K562 (cell line): ENCODE measurements at regions of chr1 and their contacts with region 1.

Region 1: GRCh38 chr1:155208541-155209311 is at the start of gene MTX1:
- DNase-seq: peak; percentile 90 to 95 (median 92)
- ATAC-seq: peak; percentile 93
- H3K4me3 ChIP-seq: peak within 1 kb of the TSS; percentile 100
- H3K27ac ChIP-seq: peak within 1 kb of the TSS; percentile 97
- H3K4me1 ChIP-seq: peaks cover 19 to 30% of the 10 kb centered on the region in 2 experiments
- H3K27me3 ChIP-seq: no peaks in the 10 kb centered on the region
- CTCF ChIP-seq: no peak
- EP300 ChIP-seq: peak; percentile 11; the same call in 1 of the 2 replicates
- POLR2A ChIP-seq: peak; percentile 76
- RAD21 ChIP-seq: no peak
- polyA plus RNA-seq, gene MTX1: 29.1 to 66.3 TPM

Region 2: GRCh38 chr1:155218854-155219591 is 10.3 kb after region 1 on chr1:
- CTCF ChIA-PET with region 1: no interaction called
- POLR2A ChIA-PET with region 1: interaction called, 10 read pairs
- in situ Hi-C with region 1: no loop called
- intact Hi-C with region 1: no loop called
- DNase-seq: peak; percentile 64 to 82 (median 66)
- ATAC-seq: peak; percentile 77
- H3K4me3 ChIP-seq: peak overlapping the region; percentile 13; the same call in 1 of the 2 replicates
- H3K27ac ChIP-seq: peak overlapping the region; percentile 44
- H3K4me1 ChIP-seq: peaks cover 9 to 22% of the 10 kb centered on the region in 2 experiments; a peak in 4 of 5 replicates
- H3K27me3 ChIP-seq: no peaks in the 10 kb centered on the region
- CTCF ChIP-seq: no peak
- EP300 ChIP-seq: no peak
- POLR2A ChIP-seq: no peak
- RAD21 ChIP-seq: no peak

Region 3: GRCh38 chr1:155227261-155228095 is 18.8 kb after region 1 on chr1:
- CTCF ChIA-PET with region 1: interaction called, 31 read pairs
- POLR2A ChIA-PET with region 1: interaction called, 4 read pairs
- in situ Hi-C with region 1: no loop called
- intact Hi-C with region 1: loop called (anchors 1 kb)
- DNase-seq: peak; percentile 100
- ATAC-seq: peak; percentile 96
- H3K4me3 ChIP-seq: peak overlapping the region; percentile 51
- H3K27ac ChIP-seq: peak overlapping the region; percentile 86
- H3K4me1 ChIP-seq: peaks cover 30 to 50% of the 10 kb centered on the region in 2 experiments
- H3K27me3 ChIP-seq: no peaks in the 10 kb centered on the region
- CTCF ChIP-seq: peak in 2 of 3 experiments; percentile 2 to 15; a peak in 1 of 6 replicates
- EP300 ChIP-seq: no peak
- POLR2A ChIP-seq: peak; percentile 91
- RAD21 ChIP-seq: no peak

Region 4: DNA sequence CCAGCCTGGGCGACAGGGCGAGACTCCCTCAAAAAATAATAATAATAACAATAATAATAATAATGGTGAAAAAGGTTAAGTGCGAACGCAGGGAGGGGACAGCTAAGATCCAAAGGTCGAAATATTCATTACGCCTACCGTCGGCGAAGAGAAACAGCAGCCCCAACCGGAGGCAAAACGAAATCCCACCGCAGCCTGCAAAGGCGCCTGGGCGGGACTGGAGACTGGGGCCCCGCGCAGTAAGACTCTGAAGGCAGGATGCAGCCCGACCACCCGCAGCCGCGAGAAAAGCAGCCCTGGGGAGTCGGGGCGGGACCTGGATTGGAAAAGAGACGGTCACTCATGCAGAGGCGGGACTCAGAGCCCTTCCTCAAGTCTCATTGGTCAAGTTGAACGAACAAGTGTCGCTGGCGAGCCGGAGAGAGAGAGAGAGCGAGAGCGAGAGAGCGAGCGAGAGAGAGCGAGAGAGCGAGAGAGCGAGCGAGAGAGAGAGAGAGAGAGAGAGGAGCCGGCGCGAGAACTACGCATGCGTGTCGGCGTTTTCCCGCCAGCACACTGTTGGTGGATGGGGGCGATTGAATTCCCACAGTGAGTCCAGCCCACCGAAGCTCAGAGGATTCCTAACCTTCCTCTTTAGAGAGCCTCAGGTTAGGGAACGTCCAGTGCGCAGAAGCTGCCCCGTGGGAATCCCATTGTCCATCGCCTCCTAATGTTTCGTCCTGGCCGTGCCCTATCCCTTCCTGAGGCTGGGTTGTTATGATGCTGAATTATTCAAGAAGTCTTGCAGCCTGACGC is 35.8 kb after region 1 on chr1:
- CTCF ChIA-PET with region 1: interaction called, 4 read pairs
- POLR2A ChIA-PET with region 1: interaction called, 3 read pairs
- in situ Hi-C with region 1: no loop called
- intact Hi-C with region 1: loop called (anchors 2 kb)
- DNase-seq: peak; percentile 92 to 99 (median 94)
- ATAC-seq: peak; percentile 97
- H3K4me3 ChIP-seq: peak overlapping the region; percentile 44
- H3K27ac ChIP-seq: peak overlapping the region; percentile 93
- H3K4me1 ChIP-seq: peaks cover 19 to 25% of the 10 kb centered on the region in 2 experiments
- H3K27me3 ChIP-seq: no peaks in the 10 kb centered on the region
- CTCF ChIP-seq: peak; percentile 40 to 70 (median 59); a peak in 5 of 6 replicates
- EP300 ChIP-seq: peak; percentile 71
- POLR2A ChIP-seq: peak; percentile 94
- RAD21 ChIP-seq: peak; percentile 24 to 37

Region 5: DNA sequence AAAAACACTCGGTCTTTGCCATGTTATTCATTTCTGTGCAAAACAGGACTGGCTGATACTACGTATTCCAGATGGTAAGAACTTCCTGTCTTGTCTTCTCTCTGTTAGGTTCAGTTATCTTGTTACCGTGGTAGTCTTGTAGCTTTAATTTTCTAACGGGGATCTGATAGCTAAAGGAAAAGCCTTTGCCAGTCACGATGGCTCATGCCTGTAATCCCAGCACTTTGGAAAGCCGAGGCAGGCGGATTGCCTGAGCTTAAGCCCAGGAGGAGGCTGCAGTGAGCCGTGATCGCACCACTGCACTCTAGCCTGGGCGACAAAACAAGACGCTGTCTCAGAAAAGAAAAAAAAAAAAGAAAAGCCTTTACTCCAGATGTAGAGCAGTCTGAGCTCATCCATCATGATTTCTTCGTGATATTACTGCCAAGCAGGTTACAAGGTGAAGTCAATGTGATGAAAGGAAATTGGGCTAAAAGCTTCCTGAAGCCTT is 390.2 kb after region 1 on chr1:
- CTCF ChIA-PET with region 1: no interaction called
- POLR2A ChIA-PET with region 1: no interaction called
- in situ Hi-C with region 1: loop called (anchors 5 kb)
- intact Hi-C with region 1: no loop called
- DNase-seq: peak in 1 of 4 experiments; percentile 41
- ATAC-seq: peak; percentile 83
- H3K4me3 ChIP-seq: no peak overlapping the region
- H3K27ac ChIP-seq: peak overlapping the region; percentile 43; the same call in 1 of the 3 replicates
- H3K4me1 ChIP-seq: peaks cover 4 to 6% of the 10 kb centered on the region in 2 experiments; a peak in 3 of 5 replicates
- H3K27me3 ChIP-seq: no peaks in the 10 kb centered on the region
- CTCF ChIP-seq: 0 out of 6 replicates have a peak, but pooled peaks of 1 of the 3 experiments have one; percentile 14
- EP300 ChIP-seq: no peak
- POLR2A ChIP-seq: no peak
- RAD21 ChIP-seq: peak; percentile 13 to 30; a peak in 3 of 4 replicates